ENCODE measurements at regions of chr20 and their contacts with region 1.

Region 1: DNA sequence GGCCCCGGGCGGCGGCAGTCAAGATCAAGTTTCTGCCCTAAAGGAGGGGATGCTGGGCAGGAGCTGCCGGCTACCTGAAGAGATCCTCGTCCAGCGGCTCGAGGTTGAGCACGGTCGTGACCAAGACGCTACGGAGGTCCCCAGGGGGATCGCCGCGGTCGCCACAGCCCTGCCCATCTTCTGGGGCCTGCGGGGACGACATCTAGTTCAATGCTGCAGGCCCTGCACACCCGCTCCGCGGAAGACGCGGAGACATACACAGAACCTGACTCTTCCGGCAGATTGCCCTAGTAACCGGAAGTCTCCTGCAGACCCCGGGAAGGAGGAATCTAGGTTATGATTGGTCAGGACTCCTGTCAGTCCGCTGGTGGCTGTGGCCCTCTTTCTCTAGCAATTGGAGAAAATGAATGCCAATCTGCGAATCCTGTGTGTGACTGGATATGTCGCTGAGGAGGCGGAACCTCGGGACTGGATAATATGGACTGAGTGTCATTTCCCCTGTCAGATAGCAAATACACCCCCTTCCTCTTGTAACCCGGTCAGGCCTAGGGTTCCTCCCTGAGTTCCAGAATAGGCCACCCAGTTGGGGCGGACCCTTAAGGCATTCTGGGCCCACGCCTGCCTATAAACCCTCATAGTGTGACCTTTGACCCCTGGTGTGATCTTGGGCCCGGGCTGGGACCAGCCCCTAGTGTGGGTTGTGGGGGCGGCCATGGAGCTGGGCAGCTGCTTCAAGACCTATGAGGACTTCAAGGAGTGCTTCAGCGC is at the starts of genes ACOT8 and ZSWIM3:
- DNase-seq: peak; percentile 82 to 100
- ATAC-seq: peak; percentile 95 to 98 (median 95)
- H3K4me3 ChIP-seq: peak within 1 kb of the TSS; percentile 91
- H3K4me3 Mint-ChIP-seq: peak within 1 kb of the TSS; percentile 95
- H3K27ac ChIP-seq: peak within 1 kb of the TSS; percentile 99
- H3K27ac Mint-ChIP-seq: peak within 1 kb of the TSS; percentile 95 to 96
- H3K4me1 ChIP-seq: peaks cover 33% of the 10 kb centered on the region
- H3K4me1 Mint-ChIP-seq: peaks cover 38 to 59% of the 10 kb centered on the region in 2 donors
- H3K27me3 ChIP-seq: no peaks in the 10 kb centered on the region
- H3K27me3 Mint-ChIP-seq: no peaks in the 10 kb centered on the region
- CTCF ChIP-seq: no peak
- total RNA-seq, gene ACOT8: 30.5 to 35.4 (median 31.7) TPM
- total RNA-seq, gene ZSWIM3: 1.4 to 2.3 (median 1.5) TPM

Region 2: DNA sequence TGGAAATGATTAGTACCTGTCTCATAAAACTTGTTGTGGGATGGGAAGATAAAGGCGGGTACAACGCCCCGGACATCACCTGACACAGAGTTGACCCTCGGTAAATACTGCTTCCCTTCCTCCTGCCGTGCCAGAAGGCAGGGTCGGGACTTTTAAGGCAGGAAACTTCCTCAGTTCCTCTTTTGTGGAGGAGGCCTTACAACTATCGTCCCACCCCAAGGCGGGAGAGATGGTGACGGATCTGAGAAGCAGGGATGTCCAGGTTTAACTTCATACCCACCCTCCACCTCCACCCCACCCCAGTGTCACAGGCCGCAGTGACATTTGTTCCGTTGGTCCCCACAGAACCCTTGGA is 65.0 kb before region 1 on chr20:
- intact Hi-C with region 1: loop called (anchors 2 kb)
- DNase-seq: no peak
- ATAC-seq: peak in 1 of 3 donors; percentile 33
- H3K4me3 ChIP-seq: peak overlapping the region; percentile 81
- H3K4me3 Mint-ChIP-seq: peak overlapping the region; percentile 93
- H3K27ac ChIP-seq: peak overlapping the region; percentile 83
- H3K27ac Mint-ChIP-seq: peak overlapping the region; percentile 91 to 93
- H3K4me1 ChIP-seq: peaks cover 17% of the 10 kb centered on the region
- H3K4me1 Mint-ChIP-seq: peaks cover 13 to 15% of the 10 kb centered on the region in 2 donors
- H3K27me3 ChIP-seq: no peaks in the 10 kb centered on the region
- H3K27me3 Mint-ChIP-seq: no peaks in the 10 kb centered on the region
- CTCF ChIP-seq: no peak

Region 3: GRCh38 chr20:45812157-45813020 is 44.9 kb before region 1 on chr20 and contains the start of gene UBE2C:
- intact Hi-C with region 1: loop called (anchors 1 kb)
- DNase-seq: peak; percentile 93 to 97
- ATAC-seq: peak; percentile 99 to 100 (median 99)
- H3K4me3 ChIP-seq: peak within 1 kb of the TSS; percentile 51
- H3K4me3 Mint-ChIP-seq: peak within 1 kb of the TSS; percentile 87
- H3K27ac ChIP-seq: no peak within 1 kb of the TSS
- H3K27ac Mint-ChIP-seq: peak within 1 kb of the TSS; percentile 68
- H3K4me1 ChIP-seq: peaks cover 17% of the 10 kb centered on the region
- H3K4me1 Mint-ChIP-seq: peaks cover 16% of the 10 kb centered on the region in 2 donors
- H3K27me3 ChIP-seq: no peaks in the 10 kb centered on the region
- H3K27me3 Mint-ChIP-seq: no peaks in the 10 kb centered on the region
- CTCF ChIP-seq: no peak
- total RNA-seq, gene UBE2C: 0.54 to 3.2 TPM in 2 of 3 donors, not detected in the other

Region 4: DNA sequence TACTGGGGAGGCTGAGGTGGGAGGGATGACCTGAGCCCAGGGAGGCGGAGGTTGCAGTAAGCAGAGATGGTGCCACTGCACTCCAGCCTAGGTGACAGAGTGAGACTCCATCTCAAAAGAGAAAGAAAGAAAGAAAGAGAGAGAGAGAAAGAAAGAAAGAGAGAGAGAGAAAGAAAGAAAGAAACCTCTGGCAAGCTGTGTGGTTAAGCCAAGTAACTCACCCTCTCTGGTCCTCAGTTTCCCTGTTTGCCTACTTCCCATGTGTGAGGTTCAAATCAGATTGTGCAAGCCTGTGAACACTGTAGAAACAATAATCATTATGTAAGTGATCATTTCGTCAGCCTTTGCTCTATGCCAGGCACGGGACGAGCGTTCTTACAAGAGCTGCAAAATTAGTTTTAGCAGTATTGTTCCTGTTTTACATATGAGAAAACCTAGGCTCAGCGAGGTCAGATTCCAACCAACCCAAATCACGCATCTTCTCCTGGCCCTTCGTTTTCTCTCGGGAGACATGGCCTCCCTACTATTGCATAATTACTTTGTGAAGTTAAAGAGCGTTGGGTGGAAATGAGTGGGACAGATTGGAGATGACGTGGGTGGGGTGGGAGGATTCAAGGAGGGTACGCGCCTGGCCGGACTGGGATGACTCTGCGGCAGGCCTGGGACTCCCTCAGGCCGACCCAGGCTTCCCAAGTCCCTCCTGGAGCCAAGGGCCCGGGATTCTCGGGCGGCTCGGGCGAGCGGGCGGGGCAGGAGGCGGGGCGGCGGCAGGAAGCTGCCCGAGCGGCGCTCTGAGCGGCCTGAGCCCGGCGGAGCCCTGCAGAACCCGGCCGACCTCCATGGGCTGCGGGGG is 24.0 kb before region 1 on chr20 and contains the start of gene SNX21:
- intact Hi-C with region 1: no loop called
- DNase-seq: peak; percentile 31 to 44
- ATAC-seq: peak; percentile 71 to 78 (median 75)
- H3K4me3 ChIP-seq: peak within 1 kb of the TSS; percentile 53
- H3K4me3 Mint-ChIP-seq: peak within 1 kb of the TSS; percentile 96
- H3K27ac ChIP-seq: no peak within 1 kb of the TSS
- H3K27ac Mint-ChIP-seq: peak within 1 kb of the TSS; percentile 22 to 53
- H3K4me1 ChIP-seq: peaks cover 20% of the 10 kb centered on the region
- H3K4me1 Mint-ChIP-seq: peaks cover 7 to 12% of the 10 kb centered on the region in 2 donors
- H3K27me3 ChIP-seq: no peaks in the 10 kb centered on the region
- H3K27me3 Mint-ChIP-seq: peaks cover 0 to 5% of the 10 kb centered on the region in 2 donors
- CTCF ChIP-seq: no peak
- total RNA-seq, gene SNX21: 0.99 to 1.7 (median 1.2) TPM

Region 5: GRCh38 chr20:45880988-45881788 is 23.9 kb after region 1 on chr20 and contains the start of gene ZSWIM1:
- intact Hi-C with region 1: loop called (anchors 1 kb)
- DNase-seq: peak; percentile 93 to 100
- ATAC-seq: peak; percentile 98
- H3K4me3 ChIP-seq: peak within 1 kb of the TSS; percentile 45
- H3K4me3 Mint-ChIP-seq: peak within 1 kb of the TSS; percentile 73
- H3K27ac ChIP-seq: peak within 1 kb of the TSS; percentile 49
- H3K27ac Mint-ChIP-seq: peak within 1 kb of the TSS; percentile 84 to 89
- H3K4me1 ChIP-seq: peaks cover 12% of the 10 kb centered on the region
- H3K4me1 Mint-ChIP-seq: peaks cover 18% of the 10 kb centered on the region in 2 donors
- H3K27me3 ChIP-seq: no peaks in the 10 kb centered on the region
- H3K27me3 Mint-ChIP-seq: peaks cover 0 to 4% of the 10 kb centered on the region in 2 donors
- CTCF ChIP-seq: no peak
- total RNA-seq, gene ZSWIM1: 0.59 to 2.4 (median 0.89) TPM

Region 6: GRCh38 chr20:45946149-45946970 is 89.1 kb after region 1 on chr20:
- intact Hi-C with region 1: loop called (anchors 1 kb)
- DNase-seq: peak; percentile 74 to 85
- ATAC-seq: peak; percentile 65 to 78 (median 75)
- H3K4me3 ChIP-seq: no peak overlapping the region
- H3K4me3 Mint-ChIP-seq: peak overlapping the region; percentile 72
- H3K27ac ChIP-seq: peak overlapping the region; percentile 87
- H3K27ac Mint-ChIP-seq: peak overlapping the region; percentile 90 to 97
- H3K4me1 ChIP-seq: peaks cover 47% of the 10 kb centered on the region
- H3K4me1 Mint-ChIP-seq: peaks cover 36 to 62% of the 10 kb centered on the region in 2 donors
- H3K27me3 ChIP-seq: no peaks in the 10 kb centered on the region
- H3K27me3 Mint-ChIP-seq: no peaks in the 10 kb centered on the region
- CTCF ChIP-seq: no peak

Region 7: GRCh38 chr20:45971675-45972499 is 114.6 kb after region 1 on chr20 and contains the start of gene ZNF335:
- intact Hi-C with region 1: loop called (anchors 1 kb)
- DNase-seq: peak; percentile 97 to 98
- ATAC-seq: peak; percentile 81 to 92 (median 81)
- H3K4me3 ChIP-seq: peak within 1 kb of the TSS; percentile 95
- H3K4me3 Mint-ChIP-seq: peak within 1 kb of the TSS; percentile 97
- H3K27ac ChIP-seq: peak within 1 kb of the TSS; percentile 96
- H3K27ac Mint-ChIP-seq: peak within 1 kb of the TSS; percentile 97 to 99
- H3K4me1 ChIP-seq: peaks cover 36% of the 10 kb centered on the region
- H3K4me1 Mint-ChIP-seq: peaks cover 28 to 29% of the 10 kb centered on the region in 2 donors
- H3K27me3 ChIP-seq: no peaks in the 10 kb centered on the region
- H3K27me3 Mint-ChIP-seq: no peaks in the 10 kb centered on the region
- CTCF ChIP-seq: no peak
- total RNA-seq, gene ZNF335: 101 to 119 (median 102) TPM

Measured in natural killer cell (primary cell).